Right ventricle myocardium superior (tissue), 1 donor: ENCODE measurements at regions of chr15 and their contacts with region 1.

Region 1: DNA sequence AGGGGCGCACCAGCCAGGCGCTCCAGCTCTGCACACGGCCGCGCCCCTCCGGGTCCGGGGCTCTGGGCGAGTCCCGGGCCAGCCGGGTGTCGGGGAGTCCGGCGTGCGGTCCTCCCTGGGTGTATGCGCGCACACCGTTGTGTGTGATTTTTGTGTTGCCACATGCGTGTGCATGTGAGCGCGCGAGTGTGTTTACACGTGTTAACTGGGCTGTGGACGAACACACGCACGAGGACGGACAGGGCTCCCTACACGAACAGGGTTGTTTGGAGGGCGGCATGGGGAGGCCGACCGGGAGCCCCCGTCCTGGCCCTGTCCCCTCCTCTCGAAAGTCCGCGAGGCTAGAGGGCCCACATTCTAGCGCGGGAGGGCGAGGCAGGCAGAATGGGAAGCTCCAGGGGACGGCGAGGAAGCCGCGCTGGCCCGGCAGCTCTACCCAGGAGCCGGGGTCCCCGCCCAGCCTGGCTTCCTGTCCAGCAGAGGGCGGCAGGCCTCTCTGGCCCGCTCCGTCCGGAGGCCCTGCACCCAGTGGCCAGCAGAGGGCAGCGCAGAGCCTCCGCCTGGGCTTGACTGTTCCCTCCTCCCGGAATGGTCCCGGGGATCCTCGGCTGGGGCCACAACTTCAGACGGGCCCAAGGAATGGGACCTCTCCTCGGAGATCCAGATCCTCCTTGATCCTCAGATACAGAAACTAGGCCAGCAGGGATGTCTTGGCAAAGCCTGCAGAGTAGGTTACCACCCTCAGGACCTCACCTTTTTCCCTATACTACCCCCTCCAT is 611 bp upstream of the LINGO1 start:
- DNase-seq: peak; percentile 93
- ATAC-seq: peak; percentile 98

Region 2: GRCh38 chr15:76840830-76841460 is 792.4 kb before region 1 on chr15:
- intact Hi-C with region 1: no loop called
- DNase-seq: no peak
- ATAC-seq: peak; percentile 48

Region 3: DNA sequence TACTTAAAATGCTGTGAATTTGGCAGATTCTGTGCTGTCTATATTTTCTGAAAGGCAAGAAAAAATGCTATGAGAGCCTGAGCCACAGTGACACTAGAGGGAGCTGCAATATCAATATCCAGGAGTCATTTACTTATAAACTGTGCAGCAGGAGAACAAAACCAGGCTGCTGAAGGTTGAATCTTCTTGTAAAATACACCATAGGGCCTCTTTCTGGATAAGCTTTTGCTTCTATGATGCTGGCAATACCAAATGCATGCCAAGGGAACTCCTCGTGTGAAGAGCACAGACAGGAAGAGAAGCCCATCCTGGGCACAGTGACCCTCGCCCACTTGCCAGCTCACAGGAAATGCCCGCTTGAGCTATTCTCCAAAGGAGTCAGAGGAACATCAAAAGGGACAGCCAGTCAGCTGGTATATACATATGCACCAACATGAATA is 514.4 kb before region 1 on chr15:
- intact Hi-C with region 1: loop called (anchors 5 kb)
- DNase-seq: no peak
- ATAC-seq: peak; percentile 88

Region 4: GRCh38 chr15:77526791-77527778 is 106.2 kb before region 1 on chr15:
- intact Hi-C with region 1: no loop called
- DNase-seq: no peak
- ATAC-seq: peak; percentile 58

Region 5: GRCh38 chr15:77759896-77760592 is 126.7 kb after region 1 on chr15:
- intact Hi-C with region 1: no loop called
- DNase-seq: no peak
- ATAC-seq: no peak

Region 6: GRCh38 chr15:77821188-77821958 is 188.1 kb after region 1 on chr15:
- intact Hi-C with region 1: loop called (anchors 5 kb)
- DNase-seq: peak; percentile 66
- ATAC-seq: peak; percentile 86

Region 7: GRCh38 chr15:78004919-78005634 is 371.8 kb after region 1 on chr15:
- intact Hi-C with region 1: no loop called
- DNase-seq: peak; percentile 86
- ATAC-seq: peak; percentile 85